ENCODE measurements at regions of chr9 and their contacts with region 1.

Region 1: GRCh38 chr9:105414947-105415661 is 32.7 kb upstream of the FSD1L start:
- DNase-seq: peak; percentile 63

Region 2: DNA sequence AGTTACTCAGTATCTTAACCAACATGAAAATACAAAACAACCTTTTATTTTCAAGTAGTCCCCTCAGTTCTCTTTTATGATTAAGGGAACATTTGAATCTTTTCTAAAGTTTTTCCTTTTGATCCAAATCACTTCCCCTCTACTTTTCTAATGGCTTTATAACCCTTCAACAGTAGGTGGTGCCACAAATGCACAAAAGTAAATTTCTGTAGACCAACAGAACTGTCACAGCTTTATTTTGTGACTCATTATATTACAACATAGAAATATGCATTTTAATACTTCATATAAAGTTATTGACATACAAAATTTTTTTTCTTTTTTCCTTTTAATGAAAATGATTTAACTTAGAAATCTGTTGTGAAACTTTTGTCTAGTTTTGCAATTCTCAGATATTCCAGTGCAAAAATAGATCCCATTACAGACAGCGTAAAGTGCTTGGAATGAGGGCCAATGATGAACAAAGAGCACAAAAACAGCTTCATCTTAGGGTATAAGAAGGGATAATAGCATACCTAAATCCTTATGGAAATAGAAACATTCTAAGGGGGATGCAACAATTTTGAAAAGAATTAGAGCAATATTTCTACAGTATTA is 634.2 kb before region 1 on chr9:
- in situ Hi-C with region 1: loop called (anchors 25 kb)
- DNase-seq: peak; percentile 59

Region 3: DNA sequence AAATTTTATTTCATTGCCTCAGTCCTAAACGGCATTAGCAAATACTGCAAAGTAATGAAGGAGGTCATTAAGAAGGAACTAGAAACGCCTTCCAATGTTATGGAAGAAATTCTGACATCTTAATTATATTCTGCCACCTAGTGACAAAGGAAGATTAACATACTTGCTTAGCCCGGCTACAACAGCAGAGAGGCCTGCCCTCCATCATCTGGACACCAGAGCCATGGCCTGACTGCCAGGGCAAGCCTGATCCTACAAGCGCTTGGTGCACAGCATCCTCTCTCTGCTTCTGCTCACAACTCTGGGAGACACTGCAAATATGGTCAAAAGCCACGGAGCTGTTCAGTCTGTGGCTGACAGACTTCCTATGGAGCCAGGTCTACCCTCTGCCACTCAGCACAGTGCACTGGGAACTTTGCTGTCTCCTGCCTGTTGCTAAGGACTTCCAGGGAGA is 257.9 kb before region 1 on chr9:
- in situ Hi-C with region 1: loop called (anchors 25 kb)
- DNase-seq: peak; percentile 56

Measured in KBM-7 (cell line).